Naive thymus-derived CD4-positive, alpha-beta T cell (primary cell): ENCODE measurements at regions of chr2 and their contacts with region 1.

Region 1: GRCh38 chr2:118221666-118222594 is 133.7 kb downstream of the INSIG2 start:
- DNase-seq: peak in 8 of 9 donors; percentile 27 to 65 (median 52)
- ATAC-seq: peak; percentile 82
- H3K4me3 ChIP-seq: no peak overlapping the region
- H3K4me3 Mint-ChIP-seq: peak overlapping the region in 5 of 10 donors; percentile 20 to 88 (median 85)
- H3K27ac ChIP-seq: no peak overlapping the region
- H3K27ac Mint-ChIP-seq: peak overlapping the region in 1 of 9 donors; percentile 67
- H3K4me1 ChIP-seq: peaks cover 8 to 13% of the 10 kb centered on the region in 2 donors
- H3K4me1 Mint-ChIP-seq: peaks cover 12 to 34% (median 24%) of the 10 kb centered on the region in 7 donors
- H3K27me3 ChIP-seq: peaks cover 10 to 39% of the 10 kb centered on the region in 2 donors
- H3K27me3 Mint-ChIP-seq: peaks cover 68 to 79% (median 69%) of the 10 kb centered on the region in 5 donors

Region 2: DNA sequence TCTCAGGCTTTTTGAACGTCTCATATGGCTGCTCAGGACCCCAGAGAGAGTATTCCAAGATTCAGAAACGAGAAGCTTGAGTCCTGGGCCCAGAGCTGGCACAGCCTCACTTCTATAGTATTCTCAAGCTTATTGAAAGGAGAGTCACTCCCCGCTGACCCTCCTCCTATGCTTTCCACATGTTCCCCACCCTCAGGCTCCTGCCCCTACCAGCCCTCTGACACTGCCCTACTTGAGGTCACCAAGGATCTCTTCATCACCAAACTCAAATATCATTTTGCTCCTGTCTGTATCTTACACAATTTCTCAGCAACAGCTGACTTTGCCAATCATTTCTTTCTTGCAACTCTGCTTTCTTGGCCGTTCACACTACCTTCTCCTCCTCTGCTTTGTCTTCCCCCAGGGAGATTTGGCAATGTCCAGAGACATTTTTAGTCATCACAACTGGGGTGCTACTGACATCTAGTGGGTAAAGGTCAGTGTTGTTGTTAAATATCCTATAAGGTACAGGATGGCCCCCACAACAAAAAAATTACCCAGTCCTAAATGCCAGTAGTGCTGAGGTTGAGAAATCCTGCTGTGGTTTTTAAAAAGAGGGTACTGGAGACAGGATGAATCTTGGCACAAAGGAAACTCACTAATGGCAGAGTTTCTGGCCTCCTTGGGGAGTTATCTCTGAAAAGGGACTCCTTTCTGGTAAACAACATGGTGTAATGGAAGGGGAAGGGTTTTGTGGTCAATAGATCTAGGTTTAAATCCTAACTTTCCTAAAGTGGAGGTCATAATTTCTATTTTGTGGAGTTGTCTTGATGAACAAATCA is 160.6 kb before region 1 on chr2:
- CTCF ChIA-PET with region 1: no interaction called
- POLR2A ChIA-PET with region 1: no interaction called
- intact Hi-C with region 1: no loop called
- DNase-seq: no peak
- ATAC-seq: peak; percentile 72
- H3K4me3 ChIP-seq: no peak overlapping the region
- H3K4me3 Mint-ChIP-seq: no peak overlapping the region
- H3K27ac ChIP-seq: no peak overlapping the region
- H3K27ac Mint-ChIP-seq: no peak overlapping the region
- H3K4me1 ChIP-seq: no peaks in the 10 kb centered on the region
- H3K4me1 Mint-ChIP-seq: peaks cover 0 to 13% (median 4%) of the 10 kb centered on the region in 7 donors
- H3K27me3 ChIP-seq: no peaks in the 10 kb centered on the region
- H3K27me3 Mint-ChIP-seq: peaks cover 22 to 53% (median 27%) of the 10 kb centered on the region in 5 donors

Region 3: GRCh38 chr2:118186110-118186857 is 35.6 kb before region 1 on chr2:
- CTCF ChIA-PET with region 1: interaction called, 3 read pairs
- POLR2A ChIA-PET with region 1: interaction called, 4 read pairs
- intact Hi-C with region 1: loop called in 1 of 2 experiments (anchors 1 kb)
- DNase-seq: peak; percentile 77 to 91 (median 86)
- ATAC-seq: peak; percentile 97
- H3K4me3 ChIP-seq: peak overlapping the region; percentile 81
- H3K4me3 Mint-ChIP-seq: peak overlapping the region; percentile 89 to 98 (median 94)
- H3K27ac ChIP-seq: peak overlapping the region; percentile 74
- H3K27ac Mint-ChIP-seq: peak overlapping the region; percentile 88 to 98 (median 90)
- H3K4me1 ChIP-seq: peaks cover 6 to 9% of the 10 kb centered on the region in 2 donors
- H3K4me1 Mint-ChIP-seq: peaks cover 7 to 25% (median 21%) of the 10 kb centered on the region in 7 donors
- H3K27me3 ChIP-seq: no peaks in the 10 kb centered on the region
- H3K27me3 Mint-ChIP-seq: peaks cover 0 to 2% (median 0%) of the 10 kb centered on the region in 5 donors

Region 4: GRCh38 chr2:118309946-118310680 is 88.2 kb after region 1 on chr2:
- CTCF ChIA-PET with region 1: no interaction called
- POLR2A ChIA-PET with region 1: no interaction called
- intact Hi-C with region 1: loop called (anchors 1 to 2 kb)
- DNase-seq: peak; percentile 51 to 82 (median 75)
- ATAC-seq: peak; percentile 81
- H3K4me3 ChIP-seq: peak overlapping the region; percentile 89
- H3K4me3 Mint-ChIP-seq: peak overlapping the region; percentile 81 to 95 (median 90)
- H3K27ac ChIP-seq: peak overlapping the region; percentile 89
- H3K27ac Mint-ChIP-seq: peak overlapping the region; percentile 87 to 99 (median 96)
- H3K4me1 ChIP-seq: peaks cover 10 to 12% of the 10 kb centered on the region in 2 donors
- H3K4me1 Mint-ChIP-seq: peaks cover 0 to 21% (median 9%) of the 10 kb centered on the region in 7 donors
- H3K27me3 ChIP-seq: no peaks in the 10 kb centered on the region
- H3K27me3 Mint-ChIP-seq: peaks cover 0 to 21% (median 0%) of the 10 kb centered on the region in 5 donors

Region 5: GRCh38 chr2:118492335-118492734 is 270.4 kb after region 1 on chr2:
- CTCF ChIA-PET with region 1: no interaction called
- POLR2A ChIA-PET with region 1: no interaction called
- intact Hi-C with region 1: loop called in 1 of 2 experiments (anchors 10 kb)
- DNase-seq: no peak
- ATAC-seq: no peak
- H3K4me3 ChIP-seq: no peak overlapping the region
- H3K4me3 Mint-ChIP-seq: no peak overlapping the region
- H3K27ac ChIP-seq: no peak overlapping the region
- H3K27ac Mint-ChIP-seq: no peak overlapping the region
- H3K4me1 ChIP-seq: no peaks in the 10 kb centered on the region
- H3K4me1 Mint-ChIP-seq: no peaks in the 10 kb centered on the region
- H3K27me3 ChIP-seq: no peaks in the 10 kb centered on the region
- H3K27me3 Mint-ChIP-seq: peaks cover 0 to 43% (median 24%) of the 10 kb centered on the region in 5 donors

Region 6: DNA sequence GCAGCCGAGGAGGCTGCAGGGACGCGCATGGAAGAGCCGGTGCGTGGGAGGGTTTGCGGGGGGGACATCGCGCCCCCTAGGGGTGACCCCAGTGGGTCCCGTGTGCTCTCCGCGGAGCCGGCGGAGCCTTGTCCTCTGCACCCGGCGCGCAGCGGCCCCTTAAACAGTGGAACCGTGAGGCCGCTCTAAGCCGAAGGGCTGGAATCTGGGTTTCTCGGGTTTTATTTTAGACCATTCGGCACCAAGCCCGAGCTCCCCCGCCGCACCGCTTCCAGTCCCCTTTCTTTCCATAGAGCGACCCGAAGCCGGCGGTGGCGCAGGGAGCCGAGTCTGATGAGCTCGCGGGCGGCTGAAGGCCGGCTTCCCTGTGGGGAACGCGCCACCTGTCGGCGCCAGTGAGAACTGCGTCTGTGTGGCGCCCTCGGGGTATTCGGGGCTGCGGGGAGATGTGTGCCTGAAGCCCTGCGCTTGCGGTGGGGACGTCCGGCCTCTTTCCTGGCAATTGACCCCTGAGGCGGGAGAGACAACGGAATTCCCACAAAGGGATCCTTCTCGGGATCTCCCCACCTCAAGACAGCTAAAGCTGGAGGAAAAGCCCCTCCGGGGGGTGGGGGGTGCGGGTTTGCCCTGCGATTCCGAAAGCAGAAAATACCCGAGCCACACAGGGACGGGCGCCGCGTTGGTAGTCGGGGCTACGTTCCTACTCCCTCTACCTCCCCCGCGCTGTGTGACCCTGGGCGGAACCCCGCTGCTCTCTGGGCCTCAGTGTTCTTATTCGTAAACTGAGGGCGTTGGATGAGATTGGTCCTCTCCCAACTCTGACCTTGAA is 633.7 kb after region 1 on chr2:
- CTCF ChIA-PET with region 1: interaction called, 24 read pairs
- POLR2A ChIA-PET with region 1: interaction called, 3 read pairs
- intact Hi-C with region 1: loop called (anchors 1 kb)
- DNase-seq: peak; percentile 61 to 90 (median 84)
- ATAC-seq: peak; percentile 93
- H3K4me3 ChIP-seq: peak overlapping the region; percentile 62
- H3K4me3 Mint-ChIP-seq: peak overlapping the region; percentile 37 to 81 (median 74)
- H3K27ac ChIP-seq: no peak overlapping the region
- H3K27ac Mint-ChIP-seq: peak overlapping the region in 2 of 9 donors; percentile 33 to 81
- H3K4me1 ChIP-seq: peaks cover 0 to 17% of the 10 kb centered on the region in 2 donors
- H3K4me1 Mint-ChIP-seq: peaks cover 19 to 38% (median 24%) of the 10 kb centered on the region in 7 donors
- H3K27me3 ChIP-seq: peaks cover 2 to 41% of the 10 kb centered on the region in 2 donors
- H3K27me3 Mint-ChIP-seq: peaks cover 70 to 93% (median 81%) of the 10 kb centered on the region in 5 donors

Region 7: GRCh38 chr2:118865106-118865505 is 643.2 kb after region 1 on chr2:
- CTCF ChIA-PET with region 1: no interaction called
- POLR2A ChIA-PET with region 1: no interaction called
- intact Hi-C with region 1: loop called (anchors 1 to 2 kb)
- DNase-seq: peak in 1 of 9 donors; percentile 32
- ATAC-seq: peak; percentile 76
- H3K4me3 ChIP-seq: no peak overlapping the region
- H3K4me3 Mint-ChIP-seq: no peak overlapping the region
- H3K27ac ChIP-seq: no peak overlapping the region
- H3K27ac Mint-ChIP-seq: no peak overlapping the region
- H3K4me1 ChIP-seq: no peaks in the 10 kb centered on the region
- H3K4me1 Mint-ChIP-seq: peaks cover 0 to 2% (median 0%) of the 10 kb centered on the region in 7 donors
- H3K27me3 ChIP-seq: no peaks in the 10 kb centered on the region
- H3K27me3 Mint-ChIP-seq: peaks cover 32 to 54% (median 48%) of the 10 kb centered on the region in 5 donors

Region 8: DNA sequence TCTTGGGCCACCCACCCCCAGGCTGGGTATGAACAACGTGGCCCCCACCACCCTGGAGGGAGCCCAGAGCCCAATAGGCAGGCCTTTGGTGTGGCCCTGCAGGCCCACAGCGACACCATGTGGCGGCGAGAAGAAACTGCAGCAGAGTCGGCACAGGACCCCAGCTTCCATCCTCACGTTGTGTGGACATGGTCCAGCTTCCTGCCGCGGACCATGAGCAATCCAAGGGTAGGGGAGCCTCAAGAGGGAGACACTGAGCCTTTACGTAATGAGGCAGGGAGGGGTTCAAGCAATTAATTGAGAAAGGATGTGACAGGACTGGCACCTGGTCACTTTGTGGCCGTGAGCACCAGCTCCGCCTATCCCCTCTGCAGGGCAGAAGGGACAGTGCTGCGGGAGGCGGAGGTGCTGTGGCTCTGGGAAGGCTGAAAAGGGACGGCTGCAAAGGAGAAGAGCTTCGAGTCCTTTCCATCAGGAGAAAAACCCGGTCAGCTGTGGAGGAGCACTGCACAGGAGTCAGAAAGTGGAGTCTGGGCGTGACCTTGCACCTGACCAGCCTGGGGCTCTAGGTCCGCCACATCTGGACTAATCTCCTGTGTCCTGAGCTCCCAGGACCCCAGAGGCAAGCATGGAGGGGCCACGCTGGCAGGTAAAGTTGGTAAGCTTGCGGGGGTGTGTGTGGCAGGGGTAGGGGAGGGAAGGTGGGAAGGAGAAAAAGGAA is 1254.5 kb after region 1 on chr2:
- CTCF ChIA-PET with region 1: no interaction called
- POLR2A ChIA-PET with region 1: no interaction called
- intact Hi-C with region 1: loop called in 1 of 2 experiments (anchors 2 kb)
- DNase-seq: peak in 6 of 9 donors; percentile 14 to 52 (median 26)
- ATAC-seq: peak; percentile 61
- H3K4me3 ChIP-seq: no peak overlapping the region
- H3K4me3 Mint-ChIP-seq: no peak overlapping the region
- H3K27ac ChIP-seq: no peak overlapping the region
- H3K27ac Mint-ChIP-seq: no peak overlapping the region
- H3K4me1 ChIP-seq: no peaks in the 10 kb centered on the region
- H3K4me1 Mint-ChIP-seq: peaks cover 0 to 2% (median 0%) of the 10 kb centered on the region in 7 donors
- H3K27me3 ChIP-seq: no peaks in the 10 kb centered on the region
- H3K27me3 Mint-ChIP-seq: peaks cover 0 to 28% (median 9%) of the 10 kb centered on the region in 5 donors